ENCODE measurements at regions of chr13 and their contacts with region 1.

Region 1: GRCh38 chr13:24313439-24313838 is 4.1 kb downstream of the C1QTNF9 start:
- DNase-seq: no peak
- H3K4me3 Mint-ChIP-seq: no peak overlapping the region
- H3K27ac Mint-ChIP-seq: no peak overlapping the region
- H3K4me1 Mint-ChIP-seq: no peaks in the 10 kb centered on the region
- H3K27me3 Mint-ChIP-seq: no peaks in the 10 kb centered on the region

Region 2: GRCh38 chr13:24557081-24557480 is 243.6 kb after region 1 on chr13:
- CTCF ChIA-PET with region 1: no interaction called
- intact Hi-C with region 1: loop called (anchors 5 kb)
- DNase-seq: no peak
- H3K4me3 Mint-ChIP-seq: no peak overlapping the region
- H3K27ac Mint-ChIP-seq: no peak overlapping the region
- H3K4me1 Mint-ChIP-seq: peaks cover 8% of the 10 kb centered on the region
- H3K27me3 Mint-ChIP-seq: peaks cover 43% of the 10 kb centered on the region

Measured in activated naive CD4-positive, alpha-beta T cell treated with anti-CD3 and anti-CD28 coated beads for 36 hours (primary cell).